Activated CD4-positive, alpha-beta T cell treated with anti-CD3 and anti-CD28 coated beads, Interleukin-2, amount 10 ng/mL, durations not matched to agents 24 days and 14 days (primary cell): ENCODE measurements at regions of chr19 and their contacts with region 1.

Region 1: DNA sequence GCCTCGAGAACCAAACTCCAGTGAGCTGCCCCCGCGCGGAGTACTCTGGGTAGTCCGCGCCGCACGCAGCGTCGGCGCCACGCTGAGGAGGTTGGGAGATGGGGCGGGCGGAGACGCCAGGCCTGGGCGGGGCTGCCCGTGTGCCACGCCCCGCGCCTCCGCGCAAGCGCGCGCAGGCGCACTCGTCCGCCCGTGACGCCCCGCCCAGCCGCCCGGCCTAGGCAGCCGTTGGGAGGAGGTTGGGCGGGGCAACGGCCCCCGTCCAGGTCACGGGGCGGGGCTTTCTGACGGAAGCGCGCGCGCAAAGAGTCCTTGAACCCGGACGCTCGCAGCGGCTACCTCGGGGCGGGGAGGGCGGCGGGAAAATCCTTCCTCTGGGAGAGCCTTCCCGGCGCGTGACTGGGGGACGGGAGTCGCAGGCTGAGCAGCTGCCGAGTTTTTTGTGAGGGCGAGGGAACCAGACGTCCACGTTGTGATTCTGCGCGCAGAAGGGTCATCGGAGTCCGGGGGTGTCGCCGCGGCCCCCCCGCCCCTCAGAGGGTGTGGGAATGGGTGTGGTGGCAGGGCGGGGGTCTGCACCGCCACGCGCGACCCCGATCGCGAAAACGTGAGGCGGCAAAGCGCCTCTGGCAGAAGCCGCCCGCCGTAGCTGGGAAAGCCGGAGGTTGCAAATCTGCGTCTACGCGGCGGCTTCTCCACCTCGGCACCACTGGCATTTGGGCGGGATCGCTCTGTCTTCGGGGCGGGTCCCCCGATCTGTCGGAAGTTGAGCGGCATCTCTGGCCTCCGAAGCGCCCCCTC is at the start of gene MED26:
- DNase-seq: peak; percentile 98
- H3K4me3 Mint-ChIP-seq: peak within 1 kb of the TSS; percentile 96
- H3K27ac Mint-ChIP-seq: peak within 1 kb of the TSS; percentile 99
- H3K4me1 Mint-ChIP-seq: peaks cover 32% of the 10 kb centered on the region
- H3K27me3 Mint-ChIP-seq: no peaks in the 10 kb centered on the region
- total RNA-seq, gene MED26: 15.5 and 16.8 TPM in 2 replicates

Region 2: DNA sequence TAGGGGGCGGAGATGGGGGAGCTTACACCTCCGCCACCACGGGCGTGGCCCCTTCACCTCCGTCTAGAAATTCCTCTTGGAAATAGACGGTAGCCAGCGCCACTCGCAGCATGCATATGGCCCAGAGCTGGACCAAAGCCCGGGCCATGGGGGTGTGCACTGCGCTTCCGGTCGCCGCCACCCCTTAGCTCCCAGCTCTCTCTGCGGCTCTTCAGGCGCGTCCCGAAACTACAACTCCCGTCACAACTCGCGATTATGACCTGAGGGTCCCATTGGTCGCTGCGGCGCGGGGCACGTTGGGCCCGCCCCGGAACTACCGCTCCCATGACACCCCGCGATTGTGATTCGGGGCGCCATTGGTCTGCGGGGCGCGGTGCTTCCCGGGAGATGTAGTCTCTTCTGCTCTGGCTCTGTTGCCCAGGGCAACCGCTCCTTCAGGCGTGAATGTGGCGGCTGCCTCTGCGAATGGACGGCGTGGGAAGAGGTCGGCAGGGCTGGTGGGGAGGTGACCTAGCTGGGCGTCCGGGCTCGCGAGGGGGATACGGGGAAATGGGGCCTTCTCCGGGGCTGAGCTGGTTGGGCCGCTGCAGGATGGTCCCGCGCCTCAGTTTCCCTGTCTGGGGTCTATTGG is 132.3 kb before region 1 on chr19 and contains the starts of genes C19orf44 and CALR3:
- intact Hi-C with region 1: loop called (anchors 1 kb)
- DNase-seq: peak; percentile 99
- H3K4me3 Mint-ChIP-seq: peak within 1 kb of the TSS; percentile 96
- H3K27ac Mint-ChIP-seq: peak within 1 kb of the TSS; percentile 93
- H3K4me1 Mint-ChIP-seq: peaks cover 14% of the 10 kb centered on the region
- H3K27me3 Mint-ChIP-seq: no peaks in the 10 kb centered on the region
- total RNA-seq, gene C19orf44: 4.9 and 5.4 TPM in 2 replicates
- total RNA-seq, gene CALR3: not detected in 2 replicates

Region 3: DNA sequence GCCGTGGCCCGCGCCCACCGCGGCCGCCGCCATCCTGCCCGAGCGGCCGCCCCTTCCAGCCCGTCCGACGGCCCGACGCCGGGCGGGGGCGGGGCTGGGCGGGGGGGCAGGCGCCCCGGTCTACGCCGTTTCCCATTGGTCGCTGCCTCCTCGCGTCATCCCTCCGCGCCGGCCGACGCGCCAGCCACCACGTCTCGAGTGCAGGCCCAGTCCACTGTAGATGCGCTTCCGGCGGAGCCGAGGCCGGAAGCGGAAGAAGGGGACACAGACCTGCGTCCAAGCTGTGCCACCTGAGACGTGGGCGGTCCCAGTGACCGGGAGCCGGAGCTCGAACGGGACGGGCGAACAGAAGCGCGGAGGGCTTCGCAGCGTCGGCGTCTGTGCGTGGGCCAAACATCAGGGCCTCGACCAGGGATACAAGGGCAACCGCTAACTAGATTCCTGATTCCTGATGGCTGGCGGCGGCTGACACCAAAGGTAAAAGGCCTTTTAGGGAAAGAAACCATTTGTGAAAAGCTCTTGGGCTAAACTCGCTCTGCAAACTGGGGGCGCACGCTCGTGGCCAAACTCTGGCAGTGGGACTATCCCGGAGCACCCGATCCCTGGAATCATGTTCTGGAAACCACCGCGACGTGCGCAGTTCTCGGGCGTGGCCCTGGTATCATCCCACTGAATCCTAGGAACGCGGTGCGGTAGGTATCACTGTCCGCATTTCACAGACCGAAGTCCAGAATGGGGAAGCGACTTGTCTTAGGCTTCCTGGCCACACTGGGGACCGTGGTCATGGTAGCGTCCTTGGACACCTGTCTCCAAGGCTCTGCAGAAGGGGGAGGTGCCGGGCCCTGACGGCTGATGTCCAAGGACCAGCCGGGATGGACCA is 55.8 kb before region 1 on chr19 and contains the start of gene SLC35E1:
- intact Hi-C with region 1: loop called (anchors 2 kb)
- DNase-seq: peak; percentile 98
- H3K4me3 Mint-ChIP-seq: peak within 1 kb of the TSS; percentile 93
- H3K27ac Mint-ChIP-seq: peak within 1 kb of the TSS; percentile 88
- H3K4me1 Mint-ChIP-seq: peaks cover 39% of the 10 kb centered on the region
- H3K27me3 Mint-ChIP-seq: no peaks in the 10 kb centered on the region
- total RNA-seq, gene SLC35E1: 60.2 and 65.0 TPM in 2 replicates

Region 4: DNA sequence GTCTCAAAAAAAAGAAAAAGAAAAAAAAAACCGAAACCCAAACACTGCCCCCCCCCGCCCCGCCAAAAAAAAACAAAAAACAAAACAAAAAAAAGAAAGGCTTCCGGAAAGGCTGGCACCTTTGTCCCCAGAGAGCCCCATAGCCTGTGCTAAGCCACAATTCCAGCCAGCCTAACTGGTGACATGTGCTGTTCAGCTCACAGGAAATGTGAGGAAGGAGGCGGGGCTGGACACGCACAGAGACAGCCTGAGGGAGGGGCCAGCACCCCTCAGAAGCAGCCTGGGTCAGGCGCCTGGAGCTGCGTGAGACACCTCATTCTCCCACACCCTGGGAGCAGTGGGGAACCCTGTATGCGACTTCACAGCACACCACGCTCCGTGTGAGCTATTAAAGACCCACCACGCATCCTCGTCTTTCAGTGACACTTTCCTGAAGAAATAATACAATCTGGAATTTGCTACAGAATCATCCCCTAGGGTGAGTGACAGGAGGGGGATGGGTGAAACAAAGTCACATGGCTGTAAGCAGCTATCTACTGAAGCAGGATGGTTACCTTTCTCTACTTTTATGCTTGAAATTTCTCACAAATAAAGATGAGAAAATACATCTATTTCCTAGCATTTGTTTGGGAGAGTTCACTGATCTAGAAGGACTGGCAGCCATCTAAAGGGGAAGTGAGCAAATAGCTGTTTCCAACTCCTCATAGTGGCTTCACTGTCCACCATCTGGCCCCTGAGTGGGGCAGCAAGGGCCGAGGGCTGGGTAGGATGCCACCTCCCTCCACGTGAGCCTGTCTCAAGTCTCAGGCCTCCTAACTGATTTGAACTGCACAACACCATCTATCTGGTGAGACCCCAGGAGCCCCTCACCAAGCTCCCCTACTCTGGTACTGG is 43.9 kb before region 1 on chr19:
- intact Hi-C with region 1: loop called (anchors 1 kb)
- DNase-seq: peak; percentile 97
- H3K4me3 Mint-ChIP-seq: peak overlapping the region; percentile 87
- H3K27ac Mint-ChIP-seq: peak overlapping the region; percentile 96
- H3K4me1 Mint-ChIP-seq: peaks cover 67% of the 10 kb centered on the region
- H3K27me3 Mint-ChIP-seq: no peaks in the 10 kb centered on the region

Region 5: GRCh38 chr19:16615808-16616207 is 12.6 kb before region 1 on chr19:
- intact Hi-C with region 1: no loop called
- DNase-seq: no peak
- H3K4me3 Mint-ChIP-seq: no peak overlapping the region
- H3K27ac Mint-ChIP-seq: peak overlapping the region; percentile 45
- H3K4me1 Mint-ChIP-seq: peaks cover 46% of the 10 kb centered on the region
- H3K27me3 Mint-ChIP-seq: no peaks in the 10 kb centered on the region

Region 6: DNA sequence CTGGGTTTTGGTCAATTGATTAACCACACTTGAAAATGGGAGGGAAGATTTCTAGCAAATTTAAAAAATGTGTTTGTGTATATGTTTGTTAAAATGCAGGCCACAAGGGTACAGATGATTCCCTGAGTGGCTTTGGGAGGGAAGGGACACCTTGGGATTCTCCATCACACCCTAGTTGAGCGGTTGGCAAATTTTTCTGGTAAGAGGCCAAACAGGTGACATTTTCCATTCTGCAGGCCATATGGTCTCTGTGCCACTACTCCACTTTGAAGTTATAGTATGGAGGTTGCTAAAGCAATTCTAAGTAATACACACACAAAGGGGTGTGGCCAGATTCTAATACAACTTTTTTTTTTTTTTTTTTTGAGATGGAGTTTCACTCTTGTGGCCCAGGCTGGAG is 12.6 kb after region 1 on chr19:
- intact Hi-C with region 1: no loop called
- DNase-seq: no peak
- H3K4me3 Mint-ChIP-seq: no peak overlapping the region
- H3K27ac Mint-ChIP-seq: no peak overlapping the region
- H3K4me1 Mint-ChIP-seq: peaks cover 4% of the 10 kb centered on the region
- H3K27me3 Mint-ChIP-seq: no peaks in the 10 kb centered on the region

Region 7: GRCh38 chr19:16659831-16660708 is 31.7 kb after region 1 on chr19 and contains the start of gene SMIM7:
- intact Hi-C with region 1: loop called (anchors 2 kb)
- DNase-seq: peak; percentile 99
- H3K4me3 Mint-ChIP-seq: peak within 1 kb of the TSS; percentile 98
- H3K27ac Mint-ChIP-seq: peak within 1 kb of the TSS; percentile 97
- H3K4me1 Mint-ChIP-seq: peaks cover 18% of the 10 kb centered on the region
- H3K27me3 Mint-ChIP-seq: peaks cover 23% of the 10 kb centered on the region
- total RNA-seq, gene SMIM7: 66.1 and 69.9 TPM in 2 replicates

Region 8: GRCh38 chr19:16688084-16688483 is 59.7 kb after region 1 on chr19:
- intact Hi-C with region 1: no loop called
- DNase-seq: no peak
- H3K4me3 Mint-ChIP-seq: no peak overlapping the region
- H3K27ac Mint-ChIP-seq: no peak overlapping the region
- H3K4me1 Mint-ChIP-seq: no peaks in the 10 kb centered on the region
- H3K27me3 Mint-ChIP-seq: no peaks in the 10 kb centered on the region